ENCODE measurements at regions of chr7 and their contacts with region 1.

Region 1: GRCh38 chr7:98753989-98754479 is 115.8 kb downstream of the TMEM130 start:
- DNase-seq: no peak
- ATAC-seq: peak in 1 of 2 donors; percentile 20
- H3K4me3 ChIP-seq: no peak overlapping the region
- H3K27ac ChIP-seq: no peak overlapping the region
- H3K4me1 ChIP-seq: no peaks in the 10 kb centered on the region
- H3K27me3 ChIP-seq: no peaks in the 10 kb centered on the region

Region 2: DNA sequence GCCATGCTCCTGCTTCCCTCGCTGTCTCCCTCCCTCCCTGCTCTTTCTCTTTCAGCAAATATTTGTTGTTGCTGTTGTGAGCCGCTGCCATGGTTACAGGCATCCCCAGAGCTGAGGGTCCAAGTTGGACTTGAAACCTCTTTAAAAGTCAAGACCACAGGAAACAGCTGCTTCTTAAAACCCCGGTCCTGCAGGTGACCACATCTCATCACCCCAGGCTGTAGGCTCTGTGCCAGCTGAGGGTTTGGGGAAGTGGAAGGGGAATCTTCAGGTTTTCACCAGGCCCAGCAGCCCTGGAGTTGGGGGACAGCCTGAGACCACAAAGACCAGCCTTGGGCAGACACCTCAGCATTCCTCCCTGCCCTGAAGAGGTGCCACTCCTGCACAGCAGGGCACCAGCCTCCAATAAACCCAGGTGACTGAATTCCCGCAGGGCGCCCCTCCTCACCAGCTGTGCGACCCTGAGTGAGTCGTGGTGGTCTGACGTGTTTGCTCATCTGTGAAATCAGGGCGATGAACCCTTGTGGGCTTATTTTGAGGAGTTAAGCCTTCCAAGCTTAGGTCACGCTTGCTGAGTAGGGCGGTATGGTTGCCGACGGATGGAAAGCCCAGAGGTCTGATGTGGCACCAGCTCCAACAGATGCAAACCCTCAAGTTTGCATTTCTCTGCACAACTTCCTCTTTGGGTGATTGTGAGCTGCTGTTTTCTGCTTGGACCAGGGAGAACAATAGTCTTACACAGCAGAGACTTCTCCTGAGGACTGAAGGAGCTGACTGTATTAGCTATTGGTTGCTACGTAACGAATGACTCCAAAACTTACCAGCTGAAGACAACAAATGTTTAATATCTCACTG is 112.2 kb before region 1 on chr7:
- intact Hi-C with region 1: no loop called
- DNase-seq: no peak
- ATAC-seq: no peak
- H3K4me3 ChIP-seq: no peak overlapping the region
- H3K27ac ChIP-seq: no peak overlapping the region
- H3K4me1 ChIP-seq: no peaks in the 10 kb centered on the region
- H3K27me3 ChIP-seq: no peaks in the 10 kb centered on the region

Region 3: DNA sequence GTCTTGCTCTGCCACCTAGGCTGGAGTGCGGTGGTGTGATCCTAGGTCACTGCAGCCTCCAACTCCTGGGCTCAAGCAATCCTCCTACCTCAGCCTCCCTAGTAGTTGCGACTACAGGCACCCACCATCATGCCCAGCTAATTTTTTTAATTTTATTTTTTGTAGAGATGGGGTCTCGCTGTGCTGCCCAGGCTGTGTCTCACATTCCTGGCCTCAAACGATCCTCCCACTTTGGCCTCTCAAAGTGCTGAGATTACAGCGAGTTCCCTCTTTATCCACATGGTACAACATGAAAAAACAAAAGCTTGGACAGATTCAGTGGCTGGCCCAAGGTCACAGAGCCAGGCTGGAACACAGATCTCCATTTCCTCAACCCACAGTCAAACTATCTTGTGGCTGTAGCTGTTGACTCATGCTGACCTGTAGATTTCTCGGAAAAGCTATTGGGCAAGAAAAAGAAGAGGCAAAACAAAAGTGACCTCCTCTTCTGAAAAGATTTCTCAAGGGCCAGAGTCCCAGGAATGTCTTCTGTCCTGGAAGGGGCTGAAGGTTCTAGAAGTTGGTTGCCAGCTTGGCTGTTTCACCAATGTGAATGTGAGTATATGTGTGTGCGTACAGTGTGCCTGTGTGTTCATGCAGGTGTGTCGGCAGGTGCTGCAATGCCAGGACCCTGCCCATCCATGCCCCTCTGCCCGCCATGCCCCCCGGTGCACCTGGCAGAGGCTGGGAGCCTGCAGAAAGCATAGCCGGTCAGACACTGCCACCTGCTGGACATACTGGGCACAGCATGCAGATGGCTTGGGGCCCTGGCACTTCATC is 87.4 kb after region 1 on chr7:
- intact Hi-C with region 1: loop called (anchors 2 to 10 kb)
- DNase-seq: peak; percentile 46 to 84 (median 81)
- ATAC-seq: peak; percentile 65 to 75
- H3K4me3 ChIP-seq: no peak overlapping the region
- H3K27ac ChIP-seq: no peak overlapping the region
- H3K4me1 ChIP-seq: no peaks in the 10 kb centered on the region
- H3K27me3 ChIP-seq: no peaks in the 10 kb centered on the region